Adrenal gland (tissue), 19 donors: ENCODE measurements at regions of chr7 and their contacts with region 1.

Region 1: DNA sequence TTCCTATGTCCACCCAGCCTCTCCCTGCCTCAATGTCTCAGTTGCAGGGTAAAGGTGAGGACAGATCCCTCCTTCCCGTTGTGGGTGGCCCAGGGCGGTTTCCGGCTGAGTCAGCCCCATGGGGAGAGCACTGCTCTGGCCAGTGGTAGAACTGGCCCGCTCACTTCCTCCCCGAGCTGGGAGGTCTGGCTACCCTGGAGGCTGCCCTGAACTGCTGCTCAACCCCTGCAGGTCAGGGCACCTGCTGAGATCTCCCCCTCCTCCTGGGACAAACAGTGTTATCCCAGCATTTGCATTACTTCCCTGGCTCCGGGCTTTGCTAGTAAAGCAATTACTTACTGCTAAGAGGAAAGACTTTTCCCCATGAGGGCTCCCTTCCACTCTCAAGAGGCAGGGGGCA is 21.4 kb upstream of the IMPDH1 start:
- DNase-seq: no peak
- H3K4me3 ChIP-seq: no peak overlapping the region
- H3K27ac ChIP-seq: no peak overlapping the region
- H3K4me1 ChIP-seq: no peaks in the 10 kb centered on the region
- H3K27me3 ChIP-seq: no peaks in the 10 kb centered on the region
- CTCF ChIP-seq: no peak
- POLR2A ChIP-seq: no peak

Region 2: DNA sequence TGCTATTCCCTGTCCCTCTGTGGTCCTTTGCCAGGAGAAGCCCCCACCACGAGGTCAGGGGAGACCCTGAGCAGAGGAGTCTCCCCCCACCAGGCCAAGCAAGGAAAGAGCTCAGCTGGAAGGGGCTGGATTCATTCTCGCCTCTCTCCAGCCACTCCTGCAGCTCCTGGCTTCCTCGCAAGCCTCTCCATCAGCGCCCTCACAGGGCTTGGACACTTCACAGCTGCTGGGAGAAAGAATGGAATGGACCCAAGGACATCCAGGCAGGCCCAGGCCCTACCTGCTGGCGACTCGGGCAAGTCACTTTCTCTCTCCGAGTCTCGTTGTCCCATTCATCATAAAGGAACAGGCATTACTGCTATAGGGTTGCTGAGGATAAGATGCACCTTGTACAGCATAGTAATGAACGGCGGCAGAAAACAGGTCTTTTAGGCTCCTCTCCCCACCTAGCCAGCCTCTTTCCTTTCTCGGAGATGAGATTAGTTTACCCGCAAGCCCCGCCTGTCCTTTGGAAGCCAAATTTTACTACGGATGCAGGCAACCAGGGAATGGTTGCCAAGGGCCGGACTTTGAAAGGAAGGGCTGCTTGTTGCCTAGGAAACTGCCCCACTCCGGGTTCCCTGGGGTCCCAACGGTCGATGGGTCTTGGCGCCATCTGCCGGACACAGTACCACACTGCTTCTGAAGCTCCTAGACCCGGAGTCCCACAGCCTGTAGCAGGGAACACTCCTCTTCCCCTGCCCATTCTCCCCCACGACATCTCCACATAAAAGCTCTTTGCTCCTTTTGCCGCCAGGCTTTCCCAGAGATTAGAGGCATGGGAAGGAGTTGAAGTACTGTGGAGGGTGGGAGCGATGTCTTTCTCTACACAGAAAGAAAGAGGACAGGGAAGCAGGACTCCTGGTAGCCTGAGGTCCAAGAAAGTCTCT is 43.7 kb before region 1 on chr7:
- intact Hi-C with region 1: no loop called
- DNase-seq: peak; percentile 75 to 90 (median 81)
- H3K4me3 ChIP-seq: no peak overlapping the region
- H3K27ac ChIP-seq: no peak overlapping the region
- H3K4me1 ChIP-seq: no peaks in the 10 kb centered on the region
- H3K27me3 ChIP-seq: no peaks in the 10 kb centered on the region
- CTCF ChIP-seq: peak; percentile 77 to 87 (median 82)
- POLR2A ChIP-seq: no peak

Region 3: DNA sequence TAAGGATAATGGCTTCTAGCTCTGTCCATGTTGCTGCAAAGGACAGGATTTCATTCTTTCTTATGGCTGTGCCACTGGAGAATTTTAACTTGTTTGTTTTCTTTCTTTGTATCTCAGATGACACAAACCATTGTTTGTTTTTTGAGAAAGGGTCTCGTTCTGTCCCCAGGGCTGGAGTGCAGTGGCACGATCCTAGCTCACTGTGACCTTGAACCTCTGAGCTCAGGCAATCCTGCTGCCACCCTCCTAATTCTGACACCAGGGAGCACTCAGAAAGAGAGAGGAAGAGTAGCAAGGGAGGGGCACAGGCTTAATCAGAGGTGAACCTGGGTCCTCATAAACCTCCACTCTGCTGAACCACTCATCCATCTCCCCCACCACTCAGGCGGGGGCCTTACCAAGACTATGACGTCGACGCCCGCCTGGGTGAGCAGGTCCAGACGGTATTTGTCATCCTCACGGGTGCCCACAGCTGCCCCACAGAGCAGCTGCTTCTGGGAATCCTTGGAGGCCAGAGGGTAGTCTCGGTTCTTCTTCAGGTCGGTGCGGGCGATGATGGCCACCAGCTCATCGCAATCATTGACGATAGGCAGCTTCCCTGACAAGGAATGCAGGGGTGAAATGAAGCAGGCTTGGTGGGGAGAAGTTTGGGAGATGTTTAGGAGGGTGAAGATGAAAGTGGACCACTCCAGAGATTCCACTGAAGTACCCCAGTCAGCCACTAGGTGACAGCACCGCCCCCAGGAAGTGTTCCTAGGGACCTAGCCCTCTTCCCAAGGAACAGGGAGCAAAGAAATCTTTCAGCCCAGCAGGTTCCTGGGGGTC is 33.0 kb before region 1 on chr7:
- intact Hi-C with region 1: loop called in 1 of 2 experiments (anchors 5 kb)
- DNase-seq: peak in 6 of 7 donors; percentile 62 to 80 (median 70)
- H3K4me3 ChIP-seq: no peak overlapping the region
- H3K27ac ChIP-seq: no peak overlapping the region
- H3K4me1 ChIP-seq: no peaks in the 10 kb centered on the region
- H3K27me3 ChIP-seq: no peaks in the 10 kb centered on the region
- CTCF ChIP-seq: peak; percentile 85 to 96 (median 90)
- POLR2A ChIP-seq: no peak